ENCODE measurements at regions of chr12 and their contacts with region 1.

Region 1: GRCh38 chr12:3202734-3203446 is 125.7 kb downstream of the TSPAN9 start:
- DNase-seq: no peak
- H3K4me3 ChIP-seq: no peak overlapping the region
- H3K27me3 ChIP-seq: peaks cover 2% of the 10 kb centered on the region; the same call in 1 of the 2 replicates
- CTCF ChIP-seq: peak; percentile 98

Region 2: GRCh38 chr12:2739817-2740641 is 462.9 kb before region 1 on chr12:
- CTCF ChIA-PET with region 1: no interaction called
- POLR2A ChIA-PET with region 1: no interaction called
- DNase-seq: no peak
- H3K4me3 ChIP-seq: no peak overlapping the region
- H3K27me3 ChIP-seq: peaks cover 17% of the 10 kb centered on the region
- CTCF ChIP-seq: peak; percentile 70

Region 3: DNA sequence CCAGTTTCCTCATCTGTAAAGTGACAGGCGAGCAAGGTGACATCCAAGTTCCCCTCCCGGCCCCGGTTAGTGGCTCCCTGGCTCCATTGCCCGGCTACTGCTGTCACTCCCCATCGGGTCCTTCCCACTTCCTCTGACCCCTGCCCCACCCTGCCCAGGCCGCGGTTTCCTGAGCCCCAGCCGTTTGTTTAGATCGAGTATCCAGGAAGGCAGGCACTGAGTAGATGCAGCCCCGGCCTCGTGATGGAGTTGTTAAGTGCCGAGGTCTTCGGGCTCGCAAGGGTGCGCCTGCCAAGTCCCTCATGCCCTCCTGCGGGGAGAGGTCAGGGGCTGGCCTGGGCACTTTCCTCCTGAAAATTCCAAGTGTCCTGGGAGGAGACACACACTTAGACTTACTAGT is 188.2 kb before region 1 on chr12:
- CTCF ChIA-PET with region 1: no interaction called
- POLR2A ChIA-PET with region 1: no interaction called
- DNase-seq: no peak
- H3K4me3 ChIP-seq: no peak overlapping the region
- H3K27me3 ChIP-seq: no peaks in the 10 kb centered on the region
- CTCF ChIP-seq: no peak

Region 4: GRCh38 chr12:3107071-3107583 is 95.8 kb before region 1 on chr12:
- CTCF ChIA-PET with region 1: no interaction called
- POLR2A ChIA-PET with region 1: no interaction called
- DNase-seq: no peak
- H3K4me3 ChIP-seq: no peak overlapping the region
- H3K27me3 ChIP-seq: no peaks in the 10 kb centered on the region
- CTCF ChIP-seq: 0 out of 2 replicates have a peak, but pooled peaks have one; percentile 10

Region 5: GRCh38 chr12:3148366-3149000 is 54.4 kb before region 1 on chr12:
- CTCF ChIA-PET with region 1: interaction called, 22 read pairs
- POLR2A ChIA-PET with region 1: no interaction called
- DNase-seq: no peak
- H3K4me3 ChIP-seq: no peak overlapping the region
- H3K27me3 ChIP-seq: no peaks in the 10 kb centered on the region
- CTCF ChIP-seq: no peak

Region 6: DNA sequence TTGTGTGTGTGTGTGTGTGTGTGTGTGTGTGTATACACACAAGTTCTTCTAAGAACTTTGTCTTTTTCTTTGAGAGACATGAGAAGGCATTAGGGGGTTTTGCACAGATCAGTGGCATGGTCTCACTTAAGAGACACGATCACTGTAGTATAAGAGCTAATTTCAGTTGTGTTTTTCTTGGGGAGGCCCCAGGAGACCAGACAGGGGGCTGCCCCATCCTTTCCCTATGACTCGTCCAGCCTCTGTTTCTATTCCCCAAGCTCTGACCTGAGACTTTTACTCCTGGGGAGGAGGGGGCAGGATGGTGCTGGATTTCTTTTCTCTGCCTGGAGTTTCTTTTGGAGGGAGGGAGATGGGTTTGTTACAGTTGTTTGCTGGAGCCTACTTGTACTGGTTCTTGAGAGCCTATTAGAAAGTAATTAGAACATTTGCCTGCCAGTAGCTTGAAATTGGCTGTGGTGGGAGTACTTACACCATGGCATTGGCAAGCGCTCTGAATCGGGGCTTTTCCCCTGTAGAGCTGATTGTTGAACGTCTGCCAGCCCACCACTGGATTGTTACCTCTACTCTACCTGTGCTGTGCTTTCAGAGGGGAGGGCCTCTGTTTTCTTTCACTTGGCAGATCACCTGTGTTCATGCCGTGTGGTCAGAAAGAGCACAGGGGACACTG is 16.2 kb before region 1 on chr12:
- CTCF ChIA-PET with region 1: interaction called, 19 read pairs
- POLR2A ChIA-PET with region 1: no interaction called
- DNase-seq: no peak
- H3K4me3 ChIP-seq: no peak overlapping the region
- H3K27me3 ChIP-seq: no peaks in the 10 kb centered on the region; the same call in 1 of the 2 replicates
- CTCF ChIP-seq: no peak

Region 7: GRCh38 chr12:3218228-3219171 is 15.6 kb after region 1 on chr12:
- CTCF ChIA-PET with region 1: interaction called, 41 read pairs
- POLR2A ChIA-PET with region 1: no interaction called
- DNase-seq: no peak
- H3K4me3 ChIP-seq: no peak overlapping the region
- H3K27me3 ChIP-seq: no peaks in the 10 kb centered on the region
- CTCF ChIP-seq: no peak

Region 8: DNA sequence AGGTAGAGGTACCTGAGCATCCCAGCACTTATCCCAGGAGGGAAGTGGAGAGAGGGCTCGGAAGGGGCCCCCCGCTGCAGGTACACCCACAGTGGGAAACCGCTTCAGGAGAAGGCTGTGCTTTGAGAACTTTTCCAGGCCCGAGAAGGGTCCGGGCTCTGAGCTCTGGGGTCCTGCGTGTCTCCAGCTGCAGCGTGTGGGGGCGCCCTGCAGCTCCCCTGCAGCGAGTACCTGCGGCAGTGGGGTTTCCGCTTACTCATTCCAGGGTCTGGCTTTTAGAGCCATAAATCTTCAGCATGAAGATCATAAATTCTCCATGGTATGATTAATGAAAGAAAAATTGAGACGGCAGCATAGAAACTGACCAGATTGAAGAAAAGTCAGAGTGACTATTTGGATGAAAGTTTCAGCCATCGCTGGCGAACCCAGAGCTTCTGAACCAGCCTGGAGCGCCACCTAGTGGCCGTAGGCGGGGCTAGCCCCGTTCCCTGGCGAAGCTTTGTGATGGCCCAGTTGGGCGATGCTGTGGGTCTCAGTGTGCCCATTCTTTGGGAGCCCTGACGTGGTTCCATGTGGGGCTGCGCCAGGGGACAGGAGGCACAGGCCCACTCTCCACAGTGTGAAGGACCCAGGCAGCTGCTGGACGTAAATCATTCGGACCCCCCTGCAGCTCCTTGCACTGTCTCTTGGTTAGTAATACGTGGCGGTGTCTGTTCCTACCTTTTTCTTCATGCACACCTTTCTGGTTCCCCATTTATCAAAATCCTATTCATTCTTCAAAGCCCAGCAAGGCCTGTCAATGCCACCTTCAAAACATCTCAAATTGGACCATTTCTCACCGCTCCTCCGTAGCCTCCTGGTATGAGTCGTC is 72.5 kb after region 1 on chr12:
- CTCF ChIA-PET with region 1: interaction called, 24 read pairs
- POLR2A ChIA-PET with region 1: no interaction called
- DNase-seq: no peak
- H3K4me3 ChIP-seq: no peak overlapping the region
- H3K27me3 ChIP-seq: no peaks in the 10 kb centered on the region
- CTCF ChIP-seq: peak; percentile 98

Measured in BJ (cell line).